Ovary (tissue), 10 donors: ENCODE measurements at regions of chr10 and their contacts with region 1.

Region 1: GRCh38 chr10:27568196-27569175 is 64.4 kb downstream of the RAB18 start:
- DNase-seq: no peak
- H3K4me3 ChIP-seq: no peak overlapping the region
- H3K27ac ChIP-seq: no peak overlapping the region
- H3K4me1 ChIP-seq: no peaks in the 10 kb centered on the region
- H3K27me3 ChIP-seq: no peaks in the 10 kb centered on the region
- CTCF ChIP-seq: no peak
- EP300 ChIP-seq: no peak
- POLR2A ChIP-seq: no peak

Region 2: DNA sequence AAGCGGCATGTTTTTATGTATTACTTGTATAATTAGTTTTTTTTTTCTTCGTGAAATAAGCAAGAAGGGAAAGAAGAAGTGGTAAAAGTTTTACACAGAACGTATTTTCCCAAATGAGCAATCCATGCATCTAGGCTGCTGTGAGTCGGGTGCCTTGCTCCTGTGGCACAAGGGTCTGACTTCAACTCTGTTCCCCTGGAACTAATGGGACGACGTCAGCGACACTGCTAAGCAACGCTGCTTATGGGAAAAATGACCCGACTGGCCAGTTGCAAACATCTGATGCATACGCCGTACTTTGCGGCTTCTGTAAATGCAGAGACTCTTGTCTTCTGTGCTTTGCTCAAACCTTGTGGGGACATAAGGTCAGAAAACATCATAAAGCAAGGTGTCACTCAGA is 668.1 kb after region 1 on chr10:
- intact Hi-C with region 1: loop called in 1 of 4 experiments (anchors 10 kb)
- DNase-seq: no peak
- H3K4me3 ChIP-seq: no peak overlapping the region
- H3K27ac ChIP-seq: no peak overlapping the region
- H3K4me1 ChIP-seq: no peaks in the 10 kb centered on the region
- H3K27me3 ChIP-seq: no peaks in the 10 kb centered on the region
- CTCF ChIP-seq: no peak
- EP300 ChIP-seq: no peak
- POLR2A ChIP-seq: no peak